ENCODE measurements at regions of chr12 and their contacts with region 1.

Region 1: DNA sequence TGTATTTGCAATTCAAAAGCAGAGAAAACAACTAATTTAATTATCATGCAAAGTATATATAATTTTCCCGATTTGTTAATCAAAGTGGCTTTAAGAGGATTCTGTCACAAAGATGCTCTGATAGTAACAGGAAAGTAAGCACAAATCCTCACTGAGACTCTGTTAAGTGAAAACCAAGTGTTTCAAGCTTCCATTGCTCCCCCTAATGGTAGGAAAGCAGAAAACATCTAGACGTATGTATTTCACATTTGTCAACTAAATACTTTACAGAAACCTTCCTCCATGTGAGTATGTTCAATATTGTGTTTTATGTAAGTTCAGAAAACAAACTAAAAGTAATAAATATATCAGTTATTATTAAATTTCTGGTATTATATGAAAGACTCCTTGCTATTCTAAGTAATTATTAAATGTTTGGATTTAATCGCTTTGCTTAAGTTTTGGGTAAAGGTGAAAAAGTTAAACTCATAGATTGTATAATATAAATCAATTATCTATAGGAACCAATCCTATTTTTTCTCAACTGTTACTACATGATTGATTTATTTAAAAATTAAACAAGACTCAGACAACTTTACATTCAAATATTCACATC is 1.5 kb upstream of the NTS start:
- DNase-seq: no peak
- H3K4me3 ChIP-seq: no peak overlapping the region
- H3K27ac ChIP-seq: no peak overlapping the region
- H3K4me1 ChIP-seq: no peaks in the 10 kb centered on the region
- H3K27me3 ChIP-seq: no peaks in the 10 kb centered on the region
- CTCF ChIP-seq: peak; percentile 42 to 66 (median 60)
- EP300 ChIP-seq: no peak
- POLR2A ChIP-seq: no peak

Region 2: GRCh38 chr12:85476756-85477155 is 395.8 kb before region 1 on chr12:
- in situ Hi-C with region 1: loop called in 3 of 4 experiments (anchors 5 to 25 kb)
- intact Hi-C with region 1: loop called (anchors 10 kb)
- DNase-seq: no peak
- H3K4me3 ChIP-seq: no peak overlapping the region
- H3K27ac ChIP-seq: no peak overlapping the region
- H3K4me1 ChIP-seq: no peaks in the 10 kb centered on the region
- H3K27me3 ChIP-seq: no peaks in the 10 kb centered on the region
- CTCF ChIP-seq: no peak
- EP300 ChIP-seq: no peak
- POLR2A ChIP-seq: no peak

Region 3: DNA sequence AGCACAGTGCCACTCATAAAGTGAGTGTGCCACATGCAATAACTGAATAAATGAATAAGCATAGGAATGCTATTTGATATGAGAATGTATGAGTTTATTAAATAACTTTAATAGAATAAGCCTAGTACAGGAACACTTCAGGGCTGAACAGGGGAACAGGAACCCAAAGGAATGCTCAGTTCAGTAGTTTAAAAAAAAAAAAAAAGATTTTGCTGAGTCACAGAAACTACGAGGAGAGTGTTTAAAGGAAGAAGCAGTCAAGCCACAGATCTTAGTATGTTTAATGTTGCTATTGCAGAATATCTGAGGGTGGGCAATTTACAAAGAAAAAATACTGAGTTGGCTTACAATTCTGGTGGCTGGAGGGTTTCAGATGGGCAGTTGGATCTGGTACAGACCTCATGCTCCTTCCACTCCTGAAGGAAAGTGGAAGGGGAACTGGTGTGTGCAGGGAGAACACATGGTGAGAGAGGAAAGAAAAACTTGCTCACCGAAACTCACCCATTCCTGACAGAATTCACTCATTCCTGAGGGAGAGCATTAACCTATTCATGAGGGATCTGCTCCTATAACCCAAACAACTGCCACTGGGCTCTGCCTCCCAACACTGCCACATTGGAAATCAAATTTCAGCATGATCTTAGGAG is 1263.9 kb after region 1 on chr12:
- in situ Hi-C with region 1: no loop called
- intact Hi-C with region 1: no loop called
- DNase-seq: no peak
- H3K4me3 ChIP-seq: no peak overlapping the region
- H3K27ac ChIP-seq: no peak overlapping the region
- H3K4me1 ChIP-seq: no peaks in the 10 kb centered on the region
- H3K27me3 ChIP-seq: no peaks in the 10 kb centered on the region
- CTCF ChIP-seq: no peak
- EP300 ChIP-seq: no peak
- POLR2A ChIP-seq: no peak

Measured in transverse colon (tissue), 4 donors.